ENCODE measurements at regions of chr5 and their contacts with region 1.

Region 1: GRCh38 chr5:36695677-36696673 is 89.6 kb downstream of the SLC1A3 start:
- DNase-seq: peak; percentile 80
- H3K4me3 Mint-ChIP-seq: no peak overlapping the region
- H3K27ac Mint-ChIP-seq: no peak overlapping the region
- H3K4me1 Mint-ChIP-seq: peaks cover 6% of the 10 kb centered on the region
- H3K27me3 Mint-ChIP-seq: peaks cover 7% of the 10 kb centered on the region
- CTCF ChIP-seq: peak; percentile 83

Region 2: DNA sequence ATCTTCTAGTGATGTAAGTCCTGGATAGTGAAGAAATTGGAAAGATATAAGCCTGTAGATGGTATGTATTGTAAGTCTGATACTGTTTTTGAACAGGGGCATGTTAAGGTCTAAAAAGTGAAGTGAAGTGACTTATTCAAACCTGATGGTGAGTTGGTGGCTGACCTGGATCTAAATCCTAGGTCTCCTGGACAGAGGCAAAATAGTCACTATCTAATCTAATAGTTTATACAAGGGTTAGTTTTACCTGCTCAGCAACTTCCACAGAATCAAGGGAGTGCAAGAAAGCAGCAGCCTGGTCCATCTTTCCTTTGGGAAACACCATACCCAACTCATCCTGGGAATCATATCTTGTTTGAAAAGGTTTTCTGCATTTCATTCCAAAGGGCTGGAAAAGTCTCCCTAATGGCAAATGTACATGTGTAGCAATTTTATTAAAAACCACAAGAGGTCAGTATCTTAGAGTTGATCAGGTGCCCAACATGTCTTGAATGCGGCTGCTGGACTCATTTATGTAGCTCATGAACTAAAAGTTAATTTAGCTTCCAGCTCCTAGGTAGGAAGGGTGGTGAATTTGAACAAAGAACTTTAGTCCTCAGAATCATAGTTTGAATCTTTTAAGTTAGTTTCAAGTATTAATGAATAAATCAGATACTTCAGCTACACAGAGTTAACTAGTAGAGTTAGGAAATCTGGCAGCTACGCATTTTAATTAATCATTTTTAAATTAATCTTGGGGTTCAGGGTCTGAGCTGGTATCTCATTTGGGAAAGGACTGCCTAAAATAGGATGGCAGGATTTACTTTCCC is 518.1 kb before region 1 on chr5:
- CTCF ChIA-PET with region 1: interaction called, 28 read pairs
- POLR2A ChIA-PET with region 1: no interaction called
- intact Hi-C with region 1: loop called (anchors 5 kb)
- DNase-seq: peak; percentile 49
- H3K4me3 Mint-ChIP-seq: no peak overlapping the region
- H3K27ac Mint-ChIP-seq: no peak overlapping the region
- H3K4me1 Mint-ChIP-seq: no peaks in the 10 kb centered on the region
- H3K27me3 Mint-ChIP-seq: no peaks in the 10 kb centered on the region
- CTCF ChIP-seq: peak; percentile 49

Region 3: GRCh38 chr5:36403632-36404311 is 292.2 kb before region 1 on chr5:
- CTCF ChIA-PET with region 1: interaction called, 18 read pairs
- POLR2A ChIA-PET with region 1: no interaction called
- intact Hi-C with region 1: no loop called
- DNase-seq: peak; percentile 79
- H3K4me3 Mint-ChIP-seq: no peak overlapping the region
- H3K27ac Mint-ChIP-seq: peak overlapping the region; percentile 40
- H3K4me1 Mint-ChIP-seq: peaks cover 11% of the 10 kb centered on the region
- H3K27me3 Mint-ChIP-seq: no peaks in the 10 kb centered on the region
- CTCF ChIP-seq: no peak

Region 4: DNA sequence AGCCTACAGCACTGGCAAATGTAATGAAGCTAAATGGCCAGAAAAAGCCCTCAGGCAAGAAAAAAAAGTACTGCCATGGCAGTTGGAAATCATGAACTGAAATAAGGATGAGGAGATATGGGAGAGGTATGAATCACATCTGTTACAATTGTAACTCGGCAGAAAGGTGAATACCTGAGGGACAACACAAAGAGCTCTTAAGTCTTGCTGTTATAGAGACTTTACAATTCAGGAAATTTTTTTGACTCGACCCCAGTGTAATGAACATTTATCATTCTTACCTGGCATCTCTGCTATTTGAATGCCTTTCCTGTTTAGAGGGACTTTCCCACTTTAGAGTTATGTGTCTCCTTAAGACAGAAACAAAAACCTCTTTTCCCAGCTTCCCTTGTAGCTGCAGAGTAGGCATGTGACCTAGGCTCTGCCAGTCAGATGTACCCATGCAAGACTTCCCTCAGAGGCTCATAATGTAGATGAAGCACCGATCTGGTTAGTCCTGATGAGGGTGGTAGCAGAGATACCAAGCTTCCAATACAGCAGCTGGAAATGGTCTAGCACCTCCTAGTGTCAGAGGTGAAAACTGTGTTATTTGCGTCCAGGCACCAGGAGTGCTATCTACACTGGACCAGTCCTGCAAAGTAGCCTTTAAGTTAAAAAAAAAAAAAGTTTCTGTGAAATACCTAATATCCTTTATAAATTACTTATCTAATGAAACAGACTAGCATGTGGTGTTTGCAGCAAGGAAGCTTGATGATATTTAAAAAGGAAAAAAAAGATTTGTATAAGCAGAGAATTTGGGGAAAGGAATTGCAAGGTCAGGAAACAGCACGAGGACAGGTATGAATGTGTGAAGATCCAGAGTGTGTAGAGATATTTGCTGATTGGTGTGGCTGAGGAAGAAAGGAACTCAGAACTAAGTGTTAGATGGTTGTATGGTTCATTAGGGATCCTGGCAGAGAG is 236.5 kb before region 1 on chr5:
- CTCF ChIA-PET with region 1: interaction called, 15 read pairs
- POLR2A ChIA-PET with region 1: interaction called, 3 read pairs
- intact Hi-C with region 1: no loop called
- DNase-seq: peak; percentile 53
- H3K4me3 Mint-ChIP-seq: no peak overlapping the region
- H3K27ac Mint-ChIP-seq: no peak overlapping the region
- H3K4me1 Mint-ChIP-seq: peaks cover 31% of the 10 kb centered on the region
- H3K27me3 Mint-ChIP-seq: no peaks in the 10 kb centered on the region
- CTCF ChIP-seq: peak; percentile 23

Region 5: GRCh38 chr5:36507332-36507952 is 188.5 kb before region 1 on chr5:
- CTCF ChIA-PET with region 1: interaction called, 170 read pairs
- POLR2A ChIA-PET with region 1: interaction called, 4 read pairs
- intact Hi-C with region 1: loop called (anchors 1 kb)
- DNase-seq: peak; percentile 87
- H3K4me3 Mint-ChIP-seq: no peak overlapping the region
- H3K27ac Mint-ChIP-seq: no peak overlapping the region
- H3K4me1 Mint-ChIP-seq: peaks cover 13% of the 10 kb centered on the region
- H3K27me3 Mint-ChIP-seq: no peaks in the 10 kb centered on the region
- CTCF ChIP-seq: peak; percentile 88

Region 6: DNA sequence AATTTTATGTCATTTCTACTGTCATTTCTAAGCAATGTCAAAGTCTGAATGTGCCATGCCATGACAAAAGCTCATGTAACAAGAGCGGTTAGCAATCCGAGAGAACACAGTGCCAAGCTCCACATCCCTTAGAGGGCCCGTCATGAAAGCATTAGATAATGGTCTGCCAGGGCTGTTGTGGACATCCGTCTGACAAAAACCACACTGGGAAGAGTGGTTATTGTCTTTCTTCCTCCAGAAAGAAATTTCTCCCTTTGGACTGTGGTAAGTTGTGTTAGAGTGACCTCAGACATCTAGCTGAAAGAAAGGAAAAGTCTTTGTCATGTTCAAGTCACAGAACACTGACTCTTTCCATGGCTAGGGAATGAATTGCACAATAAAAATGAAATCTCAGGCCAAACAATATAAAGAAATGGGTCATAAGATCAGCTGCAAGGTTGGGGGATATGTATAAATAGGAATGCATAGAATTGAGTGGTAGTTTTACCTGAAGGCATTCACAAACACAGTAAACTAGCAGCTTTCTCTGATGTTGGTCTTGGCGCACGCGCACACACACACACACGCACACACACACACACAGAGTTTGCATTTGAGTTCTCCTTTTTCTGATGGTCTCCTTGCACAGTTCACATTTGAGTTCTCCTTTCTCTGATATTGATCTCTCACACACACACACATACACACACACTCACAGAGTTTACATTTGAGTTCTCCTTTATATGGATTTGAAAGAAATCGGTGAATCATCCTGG is 84.3 kb before region 1 on chr5:
- CTCF ChIA-PET with region 1: interaction called, 12 read pairs
- POLR2A ChIA-PET with region 1: interaction called, 35 read pairs
- intact Hi-C with region 1: no loop called
- DNase-seq: no peak
- H3K4me3 Mint-ChIP-seq: no peak overlapping the region
- H3K27ac Mint-ChIP-seq: no peak overlapping the region
- H3K4me1 Mint-ChIP-seq: peaks cover 9% of the 10 kb centered on the region
- H3K27me3 Mint-ChIP-seq: no peaks in the 10 kb centered on the region
- CTCF ChIP-seq: no peak

Region 7: DNA sequence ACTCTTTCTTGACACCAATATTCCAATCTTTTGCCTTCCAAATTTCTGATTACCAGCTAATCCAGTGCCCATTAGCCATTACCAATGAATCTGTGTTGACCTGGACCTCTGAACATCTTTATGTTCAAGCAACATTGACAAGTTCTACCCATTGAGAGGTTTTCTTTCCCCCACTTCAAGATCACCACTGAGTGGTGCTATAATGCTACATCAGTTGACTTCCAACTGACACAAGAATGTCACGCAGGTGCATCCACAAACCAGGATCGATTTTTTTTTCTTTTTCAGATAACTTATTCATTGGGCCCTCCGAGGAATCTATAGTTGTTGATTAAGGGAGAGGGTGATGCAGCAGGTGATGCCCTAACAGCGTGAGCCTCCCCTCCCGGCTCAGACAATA is 13.0 kb after region 1 on chr5:
- CTCF ChIA-PET with region 1: interaction called, 33 read pairs
- POLR2A ChIA-PET with region 1: no interaction called
- intact Hi-C with region 1: no loop called
- DNase-seq: no peak
- H3K4me3 Mint-ChIP-seq: no peak overlapping the region
- H3K27ac Mint-ChIP-seq: no peak overlapping the region
- H3K4me1 Mint-ChIP-seq: no peaks in the 10 kb centered on the region
- H3K27me3 Mint-ChIP-seq: no peaks in the 10 kb centered on the region
- CTCF ChIP-seq: no peak